ENCODE measurements at regions of chr5 and their contacts with region 1.

Region 1: DNA sequence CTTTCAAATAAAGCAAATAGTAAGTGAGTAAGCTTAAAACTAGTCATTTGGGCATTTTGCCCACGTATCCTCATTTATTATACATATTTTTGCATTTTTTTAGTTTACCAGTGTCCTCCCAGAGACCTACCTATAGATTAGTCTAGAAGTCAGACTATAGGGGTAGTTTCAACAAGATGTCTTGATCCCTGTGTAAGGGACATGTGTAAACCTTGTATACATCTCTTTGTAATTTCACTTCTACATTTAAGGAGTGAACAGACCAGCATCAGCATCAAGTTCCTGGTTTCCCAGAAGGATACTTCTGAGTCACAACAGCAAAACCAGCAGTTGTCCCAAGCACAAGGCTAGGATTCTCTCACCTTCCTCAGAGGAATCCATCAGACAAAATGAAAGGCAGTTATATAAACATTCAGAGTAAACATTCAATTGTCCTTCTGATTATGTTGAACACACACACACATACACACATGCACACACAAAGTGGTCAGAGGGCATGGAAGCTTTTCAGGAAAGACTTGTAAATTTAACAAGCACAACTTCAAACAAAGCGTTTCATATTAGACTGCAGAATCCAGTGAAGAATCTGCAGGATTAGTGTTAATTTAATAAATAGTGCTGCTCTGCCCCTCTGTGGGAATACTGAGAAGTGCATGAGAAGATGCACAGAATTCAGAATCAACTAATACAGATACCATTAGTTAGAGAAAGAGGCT is 55.4 kb downstream of the HINT1 start:
- DNase-seq: peak; percentile 46 to 50
- H3K4me3 ChIP-seq: no peak overlapping the region
- H3K4me1 ChIP-seq: no peaks in the 10 kb centered on the region
- H3K27me3 ChIP-seq: peaks cover 9% of the 10 kb centered on the region

Region 2: GRCh38 chr5:130885027-130885426 is 224.7 kb before region 1 on chr5:
- in situ Hi-C with region 1: loop called (anchors 10 kb)
- DNase-seq: no peak
- H3K4me3 ChIP-seq: no peak overlapping the region
- H3K4me1 ChIP-seq: no peaks in the 10 kb centered on the region
- H3K27me3 ChIP-seq: peaks cover 7% of the 10 kb centered on the region; the same call in 1 of the 2 replicates

Measured in HAP-1 (cell line).